PC-3 (cell line): ENCODE measurements at regions of chr5 and their contacts with region 1.

Region 1: DNA sequence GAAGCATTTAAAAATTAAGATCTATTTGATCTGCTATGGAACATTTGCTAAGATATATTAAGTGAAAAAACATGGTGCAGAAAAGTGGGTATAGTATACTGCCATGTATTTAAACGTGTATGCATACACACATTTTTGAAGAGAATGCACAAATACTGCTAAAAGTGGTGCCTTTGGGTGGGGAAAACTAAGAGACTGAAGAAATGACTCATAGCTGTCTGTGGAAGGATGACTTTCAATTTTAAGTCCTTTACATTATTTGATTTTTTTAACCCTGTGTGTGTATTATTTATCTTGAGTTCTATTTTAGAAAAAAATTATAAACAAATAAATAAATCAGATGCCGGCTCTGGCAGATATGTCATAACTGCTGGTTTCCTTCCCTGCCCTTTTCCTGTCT is 120.7 kb upstream of the SLIT3 start:
- DNase-seq: no peak
- ATAC-seq: no peak
- H3K4me3 ChIP-seq: no peak overlapping the region
- H3K27ac ChIP-seq: no peak overlapping the region
- H3K4me1 ChIP-seq: no peaks in the 10 kb centered on the region
- H3K27me3 ChIP-seq: peaks cover 30% of the 10 kb centered on the region
- CTCF ChIP-seq: no peak

Region 2: DNA sequence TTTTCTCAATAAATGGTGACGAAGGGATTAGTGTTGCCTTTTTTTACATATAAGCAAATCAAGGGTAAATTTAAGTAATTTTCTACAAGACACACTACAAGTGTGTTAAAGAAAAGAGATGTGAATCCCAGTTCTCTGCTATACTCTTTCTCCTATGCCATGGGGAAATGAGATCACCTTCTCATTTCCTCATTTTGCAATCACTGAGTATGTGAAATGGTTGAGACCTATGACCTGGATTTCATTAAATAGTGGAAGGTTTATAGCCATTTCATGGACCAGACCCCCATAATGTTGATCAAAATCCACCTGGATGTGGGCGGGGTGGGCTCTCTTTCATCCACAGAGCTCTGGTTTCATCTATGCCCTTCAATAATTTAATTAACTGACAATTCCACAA is 53.8 kb before region 1 on chr5:
- CTCF ChIA-PET with region 1: no interaction called
- POLR2A ChIA-PET with region 1: no interaction called
- intact Hi-C with region 1: loop called (anchors 2 kb)
- DNase-seq: no peak
- ATAC-seq: no peak
- H3K4me3 ChIP-seq: no peak overlapping the region
- H3K27ac ChIP-seq: no peak overlapping the region
- H3K4me1 ChIP-seq: no peaks in the 10 kb centered on the region
- H3K27me3 ChIP-seq: peaks cover 20% of the 10 kb centered on the region
- CTCF ChIP-seq: no peak

Region 3: GRCh38 chr5:169548315-169548714 is 126.6 kb after region 1 on chr5:
- CTCF ChIA-PET with region 1: no interaction called
- POLR2A ChIA-PET with region 1: no interaction called
- intact Hi-C with region 1: no loop called
- DNase-seq: peak; percentile 66
- ATAC-seq: peak; percentile 92
- H3K4me3 ChIP-seq: no peak overlapping the region
- H3K27ac ChIP-seq: no peak overlapping the region
- H3K4me1 ChIP-seq: no peaks in the 10 kb centered on the region
- H3K27me3 ChIP-seq: peaks cover 22% of the 10 kb centered on the region
- CTCF ChIP-seq: peak; percentile 67